ENCODE measurements at regions of chr1 and their contacts with region 1.

Region 1: GRCh38 chr1:234610348-234611152 is 572 bp upstream of the IRF2BP2 start:
- DNase-seq: peak; percentile 90
- ATAC-seq: peak; percentile 56
- H3K4me3 ChIP-seq: peak overlapping the region; percentile 35 to 71 (median 40)
- H3K27ac ChIP-seq: peak overlapping the region; percentile 99
- H3K4me1 ChIP-seq: peaks cover 47% of the 10 kb centered on the region
- H3K27me3 ChIP-seq: no peaks in the 10 kb centered on the region; a peak in 2 of 5 replicates
- CTCF ChIP-seq: peak; percentile 31
- EP300 ChIP-seq: 0 out of 4 replicates have a peak, but pooled peaks of 1 of the 2 experiments have one; percentile 16
- POLR2A ChIP-seq: peak in 1 of 2 experiments; percentile 82; a peak in 2 of 4 replicates
- RAD21 ChIP-seq: peak; percentile 7; the same call in 1 of the 2 replicates

Region 2: GRCh38 chr1:234486498-234487448 is 123.8 kb before region 1 on chr1:
- CTCF ChIA-PET with region 1: no interaction called
- POLR2A ChIA-PET with region 1: interaction called, 11 read pairs
- in situ Hi-C with region 1: no loop called
- intact Hi-C with region 1: no loop called
- DNase-seq: peak; percentile 77
- ATAC-seq: peak; percentile 91
- H3K4me3 ChIP-seq: peak overlapping the region in 2 of 3 experiments; percentile 27 to 40; a peak in 1 of 6 replicates
- H3K27ac ChIP-seq: no peak overlapping the region
- H3K4me1 ChIP-seq: peaks cover 26% of the 10 kb centered on the region
- H3K27me3 ChIP-seq: 0 out of 5 replicates have a peak, but pooled peaks cover 1 to 10% of the 10 kb centered on the region in 2 experiments
- CTCF ChIP-seq: peak; percentile 91
- EP300 ChIP-seq: no peak
- POLR2A ChIP-seq: no peak
- RAD21 ChIP-seq: peak; percentile 76

Region 3: DNA sequence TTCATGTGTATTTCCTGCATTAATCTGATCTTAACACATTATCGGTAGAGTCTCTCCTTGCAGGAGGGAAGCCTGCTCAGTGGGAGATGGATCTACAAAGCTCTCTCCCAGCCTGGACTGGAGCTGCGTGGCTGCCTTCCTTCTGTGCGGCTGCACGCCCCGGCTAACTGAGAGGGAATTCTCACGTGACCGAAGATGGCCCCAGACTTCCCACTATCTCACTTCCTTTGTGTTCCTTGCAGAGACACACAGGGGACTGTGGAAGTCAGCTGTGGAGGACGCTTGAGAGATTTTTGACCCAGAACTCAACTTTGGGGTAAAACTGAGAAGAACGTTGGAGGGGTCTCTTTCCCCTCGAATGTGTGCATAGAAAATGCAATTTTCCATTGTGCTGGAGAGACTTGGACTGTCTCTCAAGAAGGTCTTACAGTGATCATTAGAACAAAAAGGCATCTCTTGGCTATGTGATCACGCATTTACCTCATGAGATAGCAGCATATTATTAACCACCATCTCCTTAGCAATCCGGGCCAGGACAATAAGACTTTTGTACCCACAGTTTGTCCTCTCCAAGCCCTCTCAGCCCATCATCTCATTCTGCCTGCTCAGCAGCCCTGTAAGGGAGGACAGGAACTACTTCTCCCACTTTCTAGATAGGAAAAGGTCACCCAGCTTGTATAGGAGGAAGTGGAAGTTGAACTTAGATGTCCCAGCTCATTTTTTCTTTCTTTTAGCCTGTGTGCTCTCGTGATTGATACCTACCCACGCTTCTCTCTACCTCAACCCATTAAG is 82.3 kb before region 1 on chr1:
- CTCF ChIA-PET with region 1: no interaction called
- POLR2A ChIA-PET with region 1: no interaction called
- in situ Hi-C with region 1: no loop called
- intact Hi-C with region 1: no loop called
- DNase-seq: no peak
- ATAC-seq: no peak; the same call in 2 of the 3 replicates
- H3K4me3 ChIP-seq: no peak overlapping the region
- H3K27ac ChIP-seq: no peak overlapping the region
- H3K4me1 ChIP-seq: peaks cover 44% of the 10 kb centered on the region
- H3K27me3 ChIP-seq: no peaks in the 10 kb centered on the region; a peak in 1 of 5 replicates
- CTCF ChIP-seq: no peak
- EP300 ChIP-seq: no peak
- POLR2A ChIP-seq: no peak
- RAD21 ChIP-seq: no peak

Region 4: DNA sequence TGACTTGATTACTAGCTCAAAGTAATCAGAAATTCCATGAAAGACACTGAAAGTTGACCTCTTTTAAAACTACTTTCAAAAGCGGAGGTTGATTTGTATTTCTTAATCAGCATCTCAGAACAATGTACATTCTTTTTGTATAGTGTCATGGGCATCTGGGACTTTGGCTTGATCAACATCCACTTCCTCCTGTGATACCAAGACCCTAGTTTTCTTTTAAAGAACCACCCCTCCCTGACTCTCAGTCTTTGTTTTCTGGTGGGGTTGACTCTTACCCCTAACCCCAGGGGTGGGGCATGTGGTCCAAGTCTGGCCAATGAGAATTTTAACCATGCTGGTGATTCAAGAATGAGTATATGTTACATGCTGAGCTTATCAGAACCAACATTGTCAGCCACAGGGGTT is 21.2 kb after region 1 on chr1:
- CTCF ChIA-PET with region 1: no interaction called
- POLR2A ChIA-PET with region 1: interaction called, 61 read pairs
- in situ Hi-C with region 1: no loop called
- intact Hi-C with region 1: loop called (anchors 1 kb)
- DNase-seq: peak; percentile 90
- ATAC-seq: peak; percentile 66
- H3K4me3 ChIP-seq: no peak overlapping the region
- H3K27ac ChIP-seq: peak overlapping the region; percentile 60
- H3K4me1 ChIP-seq: peaks cover 80% of the 10 kb centered on the region
- H3K27me3 ChIP-seq: no peaks in the 10 kb centered on the region
- CTCF ChIP-seq: no peak
- EP300 ChIP-seq: peak in 1 of 2 experiments; percentile 82; a peak in 2 of 4 replicates
- POLR2A ChIP-seq: no peak
- RAD21 ChIP-seq: no peak

Region 5: GRCh38 chr1:234692966-234693580 is 82.5 kb after region 1 on chr1:
- CTCF ChIA-PET with region 1: no interaction called
- POLR2A ChIA-PET with region 1: interaction called, 10 read pairs
- in situ Hi-C with region 1: no loop called
- intact Hi-C with region 1: no loop called
- DNase-seq: no peak
- ATAC-seq: no peak
- H3K4me3 ChIP-seq: no peak overlapping the region
- H3K27ac ChIP-seq: no peak overlapping the region
- H3K4me1 ChIP-seq: peaks cover 13% of the 10 kb centered on the region; the same call in 1 of the 2 replicates
- H3K27me3 ChIP-seq: no peaks in the 10 kb centered on the region
- CTCF ChIP-seq: no peak
- EP300 ChIP-seq: no peak
- POLR2A ChIP-seq: no peak
- RAD21 ChIP-seq: no peak

Region 6: GRCh38 chr1:234737967-234738314 is 127.4 kb after region 1 on chr1:
- CTCF ChIA-PET with region 1: no interaction called
- POLR2A ChIA-PET with region 1: interaction called, 10 read pairs
- in situ Hi-C with region 1: no loop called
- intact Hi-C with region 1: no loop called
- DNase-seq: no peak
- ATAC-seq: no peak
- H3K4me3 ChIP-seq: no peak overlapping the region
- H3K27ac ChIP-seq: no peak overlapping the region
- H3K4me1 ChIP-seq: peaks cover 37% of the 10 kb centered on the region
- H3K27me3 ChIP-seq: no peaks in the 10 kb centered on the region
- CTCF ChIP-seq: no peak
- EP300 ChIP-seq: no peak
- POLR2A ChIP-seq: no peak
- RAD21 ChIP-seq: no peak

Region 7: DNA sequence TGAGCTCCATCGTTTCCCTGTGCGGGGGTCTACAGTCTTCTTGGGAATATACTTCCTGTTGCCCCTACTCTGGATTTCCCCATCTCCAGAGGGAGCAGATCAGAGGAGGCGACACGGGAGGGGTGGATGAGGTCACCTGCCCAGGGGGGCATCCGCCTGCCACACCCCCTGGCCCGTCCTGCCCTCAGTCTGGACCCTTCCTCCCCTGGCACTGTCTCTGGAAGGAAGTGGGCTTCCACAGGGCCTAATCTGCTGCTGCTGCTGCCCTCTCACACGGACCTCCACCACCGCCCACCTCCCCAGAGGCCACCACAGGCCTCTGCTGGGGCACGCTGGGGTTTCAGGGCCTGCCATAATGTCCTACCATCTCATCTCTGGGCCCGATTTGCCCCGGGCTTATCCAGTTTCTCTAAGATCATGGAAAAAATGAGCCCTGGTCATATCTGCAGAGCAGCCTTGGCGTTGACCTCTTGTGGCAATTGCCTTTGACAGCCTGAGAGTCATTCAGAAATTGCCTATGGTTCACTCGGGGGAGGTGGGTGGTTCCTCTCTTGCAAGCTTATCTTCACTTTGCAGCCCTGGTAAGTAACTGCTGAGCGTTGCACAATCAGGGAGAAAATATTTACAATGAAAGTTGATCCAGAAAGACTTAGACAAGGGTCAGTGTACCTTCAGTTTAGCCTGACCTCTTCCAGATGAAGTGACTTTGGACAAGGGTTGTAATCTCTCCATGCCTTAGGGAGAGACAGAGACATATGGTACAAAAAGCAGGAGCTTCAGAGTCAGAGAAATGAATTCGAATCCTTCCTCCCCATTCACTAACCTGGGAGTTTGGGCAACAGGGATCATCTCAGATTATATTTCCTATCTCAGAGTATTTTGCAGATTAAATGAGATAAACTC is 265.7 kb after region 1 on chr1:
- CTCF ChIA-PET with region 1: no interaction called
- POLR2A ChIA-PET with region 1: interaction called, 120 read pairs
- in situ Hi-C with region 1: loop called (anchors 5 kb)
- intact Hi-C with region 1: loop called (anchors 1 kb)
- DNase-seq: peak; percentile 98
- ATAC-seq: peak; percentile 74
- H3K4me3 ChIP-seq: peak overlapping the region; percentile 36 to 71 (median 49); a peak in 5 of 6 replicates
- H3K27ac ChIP-seq: peak overlapping the region; percentile 98
- H3K4me1 ChIP-seq: peaks cover 93% of the 10 kb centered on the region
- H3K27me3 ChIP-seq: no peaks in the 10 kb centered on the region; a peak in 1 of 5 replicates
- CTCF ChIP-seq: no peak; the same call in 1 of the 2 replicates
- EP300 ChIP-seq: peak; percentile 74 to 97; a peak in 3 of 4 replicates
- POLR2A ChIP-seq: peak; percentile 43 to 62; a peak in 2 of 4 replicates
- RAD21 ChIP-seq: peak; percentile 20; the same call in 1 of the 2 replicates

Region 8: GRCh38 chr1:235067263-235068172 is 457.0 kb after region 1 on chr1:
- CTCF ChIA-PET with region 1: no interaction called
- POLR2A ChIA-PET with region 1: interaction called, 199 read pairs
- in situ Hi-C with region 1: loop called (anchors 5 kb)
- intact Hi-C with region 1: no loop called
- DNase-seq: peak; percentile 58
- ATAC-seq: peak; percentile 4; the same call in 2 of the 3 replicates
- H3K4me3 ChIP-seq: peak overlapping the region; percentile 41 to 76 (median 60); a peak in 5 of 6 replicates
- H3K27ac ChIP-seq: peak overlapping the region; percentile 86
- H3K4me1 ChIP-seq: peaks cover 97% of the 10 kb centered on the region
- H3K27me3 ChIP-seq: no peaks in the 10 kb centered on the region
- CTCF ChIP-seq: no peak
- EP300 ChIP-seq: no peak
- POLR2A ChIP-seq: peak in 1 of 2 experiments; percentile 21; a peak in 2 of 4 replicates
- RAD21 ChIP-seq: no peak

Measured in HepG2 (cell line).